Activated B cell treated with CpG ODN at 0.5 μM for 24 hours (primary cell): ENCODE measurements at regions of chr15 and their contacts with region 1.

Region 1: DNA sequence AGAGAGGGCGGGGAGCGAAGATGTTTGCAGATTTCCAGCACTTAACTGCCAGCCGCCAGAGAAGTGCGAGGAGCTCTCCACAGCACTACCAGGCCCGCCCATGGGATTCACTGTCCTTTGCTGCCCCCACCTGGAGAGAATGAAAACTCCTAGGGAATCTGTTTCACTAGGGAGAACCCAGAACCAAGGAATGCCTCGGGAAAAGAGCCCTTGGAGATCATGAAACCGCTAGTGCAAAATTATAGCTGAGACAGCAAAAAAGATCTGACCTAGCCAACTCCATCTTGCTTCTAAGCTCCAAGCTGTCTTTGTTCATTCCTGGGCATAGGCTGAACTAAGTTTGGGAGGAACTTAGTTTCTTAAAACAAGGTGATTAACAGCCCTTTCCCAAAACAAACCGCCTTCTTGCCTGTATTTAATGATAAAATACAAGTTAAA is 82.6 kb upstream of the GCNT3 start:
- DNase-seq: peak; percentile 32
- ATAC-seq: peak; percentile 87
- H3K4me3 Mint-ChIP-seq: no peak overlapping the region
- H3K27ac Mint-ChIP-seq: peak overlapping the region; percentile 72
- H3K4me1 Mint-ChIP-seq: peaks cover 30% of the 10 kb centered on the region
- H3K27me3 Mint-ChIP-seq: no peaks in the 10 kb centered on the region
- CTCF ChIP-seq: peak; percentile 58

Region 2: DNA sequence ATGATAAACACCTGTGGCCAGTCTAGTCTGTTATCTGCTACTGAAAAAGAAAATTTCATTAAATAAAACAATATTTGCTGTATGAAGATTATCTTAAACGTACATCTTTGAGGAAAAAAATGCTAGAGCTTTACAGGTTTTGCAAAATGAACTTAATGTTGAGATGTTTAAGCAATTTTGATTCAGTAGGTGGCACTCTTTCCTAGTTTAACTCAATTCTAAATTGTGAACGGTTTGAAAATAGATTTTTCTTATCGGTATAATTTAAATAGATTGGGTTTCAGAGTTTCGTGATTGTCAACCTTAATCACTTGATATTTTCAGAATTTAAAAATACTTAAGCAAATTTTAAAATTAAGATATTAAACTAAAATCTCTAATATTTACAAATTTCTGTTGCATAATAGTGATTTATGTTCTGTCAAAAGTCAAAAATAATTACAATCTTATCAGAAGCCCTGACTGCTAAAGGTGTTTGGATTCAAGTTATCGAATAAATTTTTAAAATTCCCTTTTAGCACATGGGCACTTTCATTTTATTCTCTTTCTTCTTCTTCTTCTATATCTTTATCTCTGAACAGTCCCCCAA is 548.5 kb before region 1 on chr15:
- CTCF ChIA-PET with region 1: interaction called, 17 read pairs
- POLR2A ChIA-PET with region 1: no interaction called
- intact Hi-C with region 1: loop called (anchors 1 kb)
- DNase-seq: no peak
- ATAC-seq: no peak
- H3K4me3 Mint-ChIP-seq: peak overlapping the region; percentile 73
- H3K27ac Mint-ChIP-seq: peak overlapping the region; percentile 96
- H3K4me1 Mint-ChIP-seq: peaks cover 62% of the 10 kb centered on the region
- H3K27me3 Mint-ChIP-seq: no peaks in the 10 kb centered on the region
- CTCF ChIP-seq: no peak

Region 3: GRCh38 chr15:59247364-59247763 is 281.6 kb before region 1 on chr15:
- CTCF ChIA-PET with region 1: interaction called, 22 read pairs
- POLR2A ChIA-PET with region 1: no interaction called
- intact Hi-C with region 1: loop called (anchors 1 kb)
- DNase-seq: no peak
- ATAC-seq: peak; percentile 52
- H3K4me3 Mint-ChIP-seq: no peak overlapping the region
- H3K27ac Mint-ChIP-seq: peak overlapping the region; percentile 24
- H3K4me1 Mint-ChIP-seq: peaks cover 71% of the 10 kb centered on the region
- H3K27me3 Mint-ChIP-seq: no peaks in the 10 kb centered on the region
- CTCF ChIP-seq: no peak

Region 4: GRCh38 chr15:59516655-59517461 is 12.1 kb before region 1 on chr15:
- CTCF ChIA-PET with region 1: interaction called, 53 read pairs
- POLR2A ChIA-PET with region 1: interaction called, 9 read pairs
- intact Hi-C with region 1: no loop called
- DNase-seq: no peak
- ATAC-seq: peak; percentile 74
- H3K4me3 Mint-ChIP-seq: peak overlapping the region; percentile 71
- H3K27ac Mint-ChIP-seq: peak overlapping the region; percentile 97
- H3K4me1 Mint-ChIP-seq: peaks cover 67% of the 10 kb centered on the region
- H3K27me3 Mint-ChIP-seq: no peaks in the 10 kb centered on the region
- CTCF ChIP-seq: no peak

Region 5: DNA sequence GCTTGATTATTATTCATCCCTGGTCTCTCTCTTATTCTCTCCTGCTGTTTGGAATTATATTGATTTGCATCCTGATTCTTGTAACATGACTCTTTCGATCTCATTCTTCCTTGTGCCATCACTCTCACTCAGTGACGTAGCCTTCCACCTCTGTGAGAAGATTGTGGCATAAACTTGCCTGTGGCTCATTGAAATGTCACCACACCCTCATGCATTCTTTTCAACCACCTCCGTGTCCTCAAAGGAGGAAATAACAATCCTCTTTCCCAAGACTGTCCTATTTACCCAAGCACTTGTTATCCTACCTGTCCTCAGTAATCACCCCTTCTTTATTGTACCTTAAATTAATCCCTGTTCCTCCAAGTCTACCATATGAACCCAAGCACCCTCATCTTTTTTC is 41.4 kb after region 1 on chr15:
- CTCF ChIA-PET with region 1: no interaction called
- POLR2A ChIA-PET with region 1: no interaction called
- intact Hi-C with region 1: no loop called
- DNase-seq: no peak
- ATAC-seq: no peak
- H3K4me3 Mint-ChIP-seq: no peak overlapping the region
- H3K27ac Mint-ChIP-seq: no peak overlapping the region
- H3K4me1 Mint-ChIP-seq: no peaks in the 10 kb centered on the region
- H3K27me3 Mint-ChIP-seq: no peaks in the 10 kb centered on the region
- CTCF ChIP-seq: no peak

Region 6: GRCh38 chr15:59636184-59636583 is 107.2 kb after region 1 on chr15:
- CTCF ChIA-PET with region 1: interaction called, 7 read pairs
- POLR2A ChIA-PET with region 1: no interaction called
- intact Hi-C with region 1: loop called (anchors 5 kb)
- DNase-seq: no peak
- ATAC-seq: no peak
- H3K4me3 Mint-ChIP-seq: no peak overlapping the region
- H3K27ac Mint-ChIP-seq: no peak overlapping the region
- H3K4me1 Mint-ChIP-seq: no peaks in the 10 kb centered on the region
- H3K27me3 Mint-ChIP-seq: no peaks in the 10 kb centered on the region
- CTCF ChIP-seq: no peak

Region 7: DNA sequence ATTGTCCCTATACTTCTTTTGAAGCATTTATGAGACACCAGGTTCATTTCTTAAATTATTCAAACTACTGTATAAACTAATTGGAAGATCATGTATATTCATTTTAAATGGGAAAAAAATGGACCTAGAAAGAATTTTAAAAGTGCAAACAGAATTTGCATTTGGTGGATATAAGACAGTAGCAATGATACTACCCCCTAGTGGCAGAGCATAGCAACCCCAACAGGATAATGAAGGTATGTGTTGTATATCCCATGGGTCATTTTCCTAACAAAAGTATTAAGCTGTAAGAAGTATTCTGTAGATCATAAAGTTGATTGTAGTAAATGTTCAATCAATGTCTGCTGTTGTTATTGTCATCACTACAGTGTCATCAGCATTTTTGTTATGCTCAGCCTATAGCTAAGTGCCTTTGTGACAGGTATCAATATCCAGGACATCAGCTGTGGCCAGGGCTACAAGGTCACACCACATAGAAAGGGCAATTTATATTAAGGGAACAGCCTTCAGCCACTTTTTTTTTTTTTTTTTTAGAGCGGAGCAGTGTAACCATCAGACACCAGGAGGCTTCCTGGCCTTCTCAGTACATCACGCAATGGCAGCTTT is 650.9 kb after region 1 on chr15:
- CTCF ChIA-PET with region 1: interaction called, 12 read pairs
- POLR2A ChIA-PET with region 1: no interaction called
- intact Hi-C with region 1: loop called (anchors 1 kb)
- DNase-seq: no peak
- ATAC-seq: peak; percentile 64
- H3K4me3 Mint-ChIP-seq: no peak overlapping the region
- H3K27ac Mint-ChIP-seq: no peak overlapping the region
- H3K4me1 Mint-ChIP-seq: no peaks in the 10 kb centered on the region
- H3K27me3 Mint-ChIP-seq: peaks cover 24% of the 10 kb centered on the region
- CTCF ChIP-seq: peak; percentile 47